Ascending aorta (tissue), 2 donors: ENCODE measurements at regions of chr5 and their contacts with region 1.

Region 1: DNA sequence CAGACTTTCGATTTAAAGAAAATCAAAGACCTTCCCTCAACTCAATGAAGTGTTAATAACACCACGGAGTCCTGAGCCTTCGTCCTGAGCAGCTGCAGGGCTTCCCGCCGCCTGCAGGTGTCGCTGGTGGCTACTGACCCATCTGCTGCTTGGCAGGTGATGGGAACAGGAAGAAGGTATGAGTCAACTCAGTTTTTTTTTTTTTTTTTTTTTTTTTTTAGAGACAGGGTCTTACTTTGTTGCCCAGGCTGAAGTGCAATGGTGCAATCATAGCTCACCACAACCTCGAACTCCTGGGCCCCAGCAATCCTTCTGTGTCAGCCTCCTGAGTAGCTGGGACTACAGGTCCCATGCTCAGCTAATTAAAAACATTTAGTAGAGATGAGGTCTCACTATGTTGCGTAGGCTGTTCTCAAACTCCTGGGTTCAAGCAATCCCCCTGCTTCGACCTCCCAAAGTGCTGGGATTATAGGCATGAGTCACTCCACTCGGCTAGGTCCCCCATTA is 185.7 kb upstream of the IL12B start:
- DNase-seq: peak; percentile 23 to 80
- H3K4me3 ChIP-seq: no peak overlapping the region
- H3K27ac ChIP-seq: peak overlapping the region; percentile 84 to 87
- H3K4me1 ChIP-seq: peaks cover 3 to 24% of the 10 kb centered on the region in 2 donors
- H3K27me3 ChIP-seq: no peaks in the 10 kb centered on the region
- CTCF ChIP-seq: peak; percentile 71 to 79 (median 73)

Region 2: DNA sequence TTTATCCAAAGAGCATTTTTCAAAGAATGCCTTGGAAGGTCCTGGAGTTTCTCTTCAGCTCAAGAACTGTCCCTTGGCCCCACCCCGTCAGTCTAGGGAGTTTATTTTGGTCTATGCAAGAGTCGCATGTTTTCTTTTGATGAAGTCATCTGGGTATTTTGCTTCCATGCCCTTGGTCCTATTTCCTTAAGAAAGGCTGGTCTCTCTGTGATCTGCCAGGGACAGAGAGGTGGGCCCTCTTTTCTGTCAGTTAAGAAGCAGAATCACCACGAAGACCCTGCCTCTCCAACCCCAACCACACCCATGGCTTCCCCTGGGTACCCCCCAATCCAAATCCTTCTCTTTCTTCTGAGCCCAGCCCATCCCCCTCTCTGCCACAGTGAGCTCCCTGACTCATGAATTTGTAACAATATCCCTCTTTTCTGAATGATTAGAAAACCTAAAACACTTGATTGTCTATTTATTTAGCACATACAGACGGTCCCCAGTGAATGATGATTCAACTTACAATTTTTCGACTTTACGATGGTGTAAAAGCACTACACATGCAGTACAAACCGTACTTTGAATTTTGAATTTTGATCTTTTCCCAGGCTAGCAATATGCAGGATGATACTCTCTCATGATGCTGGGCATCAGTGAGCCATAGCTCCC is 236.8 kb after region 1 on chr5:
- intact Hi-C with region 1: loop called (anchors 5 kb)
- DNase-seq: peak in 1 of 2 donors; percentile 85
- H3K4me3 ChIP-seq: no peak overlapping the region
- H3K27ac ChIP-seq: peak overlapping the region; percentile 90
- H3K4me1 ChIP-seq: peaks cover 0 to 50% of the 10 kb centered on the region in 2 donors
- H3K27me3 ChIP-seq: no peaks in the 10 kb centered on the region
- CTCF ChIP-seq: no peak

Region 3: GRCh38 chr5:159773062-159773924 is 257.3 kb after region 1 on chr5:
- intact Hi-C with region 1: loop called (anchors 5 kb)
- DNase-seq: peak; percentile 69 to 95
- H3K4me3 ChIP-seq: peak overlapping the region; percentile 36 to 55
- H3K27ac ChIP-seq: peak overlapping the region; percentile 94 to 95
- H3K4me1 ChIP-seq: peaks cover 2 to 31% of the 10 kb centered on the region in 2 donors
- H3K27me3 ChIP-seq: no peaks in the 10 kb centered on the region
- CTCF ChIP-seq: peak in 2 of 3 experiments; percentile 42 to 45

Region 4: GRCh38 chr5:159975462-159976019 is 459.6 kb after region 1 on chr5:
- intact Hi-C with region 1: loop called (anchors 2 kb)
- DNase-seq: peak in 1 of 2 donors; percentile 82
- H3K4me3 ChIP-seq: no peak overlapping the region
- H3K27ac ChIP-seq: peak overlapping the region; percentile 80 to 90
- H3K4me1 ChIP-seq: peaks cover 18 to 20% of the 10 kb centered on the region in 2 donors
- H3K27me3 ChIP-seq: no peaks in the 10 kb centered on the region
- CTCF ChIP-seq: peak in 2 of 3 experiments; percentile 28 to 53

Region 5: DNA sequence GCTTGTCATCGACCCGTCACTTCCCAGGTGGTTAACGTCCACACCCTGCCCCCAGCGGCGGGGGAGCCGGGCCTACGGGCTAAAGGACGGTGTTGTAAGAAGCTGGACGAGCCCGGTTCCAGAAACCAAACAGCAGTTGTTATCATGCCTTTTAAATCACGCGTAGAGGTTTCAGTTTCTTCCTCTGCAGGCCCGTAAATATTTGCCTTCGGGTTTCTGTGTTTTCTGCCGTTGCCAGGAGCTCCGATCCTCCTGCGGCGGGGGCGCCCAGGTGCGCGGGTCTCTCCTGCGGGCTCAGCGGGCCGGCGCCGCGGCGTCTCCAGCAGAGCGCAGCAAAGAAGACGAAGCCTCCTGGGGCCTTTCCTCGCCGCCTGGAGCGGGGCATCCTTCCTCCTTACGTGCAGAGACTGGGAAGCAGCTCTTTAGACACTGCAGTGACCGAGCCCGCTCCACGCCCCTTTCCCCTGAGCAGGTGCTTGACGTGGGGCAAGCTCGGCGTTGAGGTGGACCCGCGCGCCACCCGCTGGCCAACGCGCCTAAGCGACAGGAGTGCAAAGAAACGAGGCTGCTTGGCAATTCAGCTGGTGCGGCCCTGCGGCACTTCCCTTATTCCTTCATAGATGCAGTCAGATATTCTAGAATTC is 471.2 kb after region 1 on chr5:
- intact Hi-C with region 1: loop called (anchors 5 kb)
- DNase-seq: peak in 1 of 2 donors; percentile 86
- H3K4me3 ChIP-seq: peak overlapping the region; percentile 54 to 74
- H3K27ac ChIP-seq: no peak overlapping the region
- H3K4me1 ChIP-seq: peaks cover 0 to 4% of the 10 kb centered on the region in 2 donors
- H3K27me3 ChIP-seq: no peaks in the 10 kb centered on the region
- CTCF ChIP-seq: peak; percentile 73 to 92 (median 75)